Panc1 (cell line): ENCODE measurements at regions of chr5 and their contacts with region 1.

Region 1: GRCh38 chr5:176947847-176948246 is 48.7 kb upstream of the HK3 start:
- DNase-seq: no peak
- ATAC-seq: no peak
- H3K4me3 ChIP-seq: no peak overlapping the region
- H3K27ac ChIP-seq: no peak overlapping the region
- H3K4me1 ChIP-seq: no peaks in the 10 kb centered on the region
- H3K27me3 ChIP-seq: no peaks in the 10 kb centered on the region
- CTCF ChIP-seq: no peak

Region 2: DNA sequence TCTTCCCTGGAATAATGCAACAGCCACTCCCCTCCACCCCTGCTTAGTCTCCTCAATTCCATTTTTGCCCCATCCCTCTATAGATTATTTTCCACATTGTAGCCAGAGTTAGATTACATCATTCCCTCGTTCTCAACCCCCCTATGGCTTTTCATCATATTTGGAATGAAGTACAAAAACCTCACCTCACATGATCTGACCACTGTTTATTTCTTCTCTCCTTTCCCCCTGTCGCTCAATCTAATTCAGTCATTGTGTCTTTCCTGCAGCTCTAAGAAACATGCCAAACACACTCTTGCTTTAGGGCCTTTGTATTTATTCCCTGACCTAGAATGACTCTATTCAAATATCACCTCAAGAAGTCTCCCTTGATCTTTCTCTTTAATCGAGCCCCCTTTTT is 26.1 kb before region 1 on chr5:
- CTCF ChIA-PET with region 1: no interaction called
- POLR2A ChIA-PET with region 1: no interaction called
- in situ Hi-C with region 1: no loop called
- intact Hi-C with region 1: no loop called
- DNase-seq: no peak
- ATAC-seq: no peak
- H3K4me3 ChIP-seq: no peak overlapping the region
- H3K27ac ChIP-seq: no peak overlapping the region
- H3K4me1 ChIP-seq: no peaks in the 10 kb centered on the region
- H3K27me3 ChIP-seq: no peaks in the 10 kb centered on the region
- CTCF ChIP-seq: no peak

Region 3: GRCh38 chr5:176994460-176995121 is 46.7 kb after region 1 on chr5:
- CTCF ChIA-PET with region 1: no interaction called
- POLR2A ChIA-PET with region 1: interaction called, 15 read pairs
- in situ Hi-C with region 1: no loop called
- intact Hi-C with region 1: no loop called
- DNase-seq: no peak
- ATAC-seq: no peak
- H3K4me3 ChIP-seq: no peak overlapping the region
- H3K27ac ChIP-seq: no peak overlapping the region
- H3K4me1 ChIP-seq: no peaks in the 10 kb centered on the region; the same call in 1 of the 2 replicates
- H3K27me3 ChIP-seq: no peaks in the 10 kb centered on the region
- CTCF ChIP-seq: no peak